Activated naive CD4-positive, alpha-beta T cell treated with anti-CD3 and anti-CD28 coated beads for 36 hours (primary cell): ENCODE measurements at regions of chr5 and their contacts with region 1.

Region 1: DNA sequence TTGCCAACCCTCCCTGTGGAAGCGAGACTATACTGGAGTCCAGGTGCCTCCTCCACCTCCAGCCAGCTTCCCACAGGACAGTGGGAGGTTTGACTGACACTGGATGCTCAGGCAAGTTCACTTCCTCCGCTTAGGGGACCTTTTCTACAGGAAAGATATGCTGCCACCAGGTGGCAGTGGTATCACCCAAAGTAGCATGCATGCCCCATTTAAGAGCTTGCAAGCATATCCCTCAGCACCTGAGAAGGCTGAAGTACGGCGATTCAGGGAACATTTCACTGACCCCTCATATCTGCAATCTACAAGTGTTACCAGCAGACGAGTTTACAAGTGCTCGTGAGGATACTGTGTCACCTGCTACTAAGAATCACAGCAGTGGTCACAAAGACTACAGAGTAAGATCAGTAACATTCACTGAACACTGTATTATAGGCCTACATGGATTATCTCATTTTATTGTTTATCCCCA is 75.5 kb downstream of the KLHL3 start:
- DNase-seq: peak; percentile 88
- H3K4me3 Mint-ChIP-seq: no peak overlapping the region
- H3K27ac Mint-ChIP-seq: no peak overlapping the region
- H3K4me1 Mint-ChIP-seq: peaks cover 9% of the 10 kb centered on the region
- H3K27me3 Mint-ChIP-seq: no peaks in the 10 kb centered on the region

Region 2: GRCh38 chr5:137629646-137630045 is 30.7 kb before region 1 on chr5:
- CTCF ChIA-PET with region 1: interaction called, 52 read pairs
- intact Hi-C with region 1: loop called (anchors 1 kb)
- DNase-seq: peak; percentile 35
- H3K4me3 Mint-ChIP-seq: no peak overlapping the region
- H3K27ac Mint-ChIP-seq: no peak overlapping the region
- H3K4me1 Mint-ChIP-seq: no peaks in the 10 kb centered on the region
- H3K27me3 Mint-ChIP-seq: no peaks in the 10 kb centered on the region

Region 3: GRCh38 chr5:137679910-137680309 is 19.5 kb after region 1 on chr5:
- CTCF ChIA-PET with region 1: interaction called, 10 read pairs
- intact Hi-C with region 1: no loop called
- DNase-seq: no peak
- H3K4me3 Mint-ChIP-seq: no peak overlapping the region
- H3K27ac Mint-ChIP-seq: no peak overlapping the region
- H3K4me1 Mint-ChIP-seq: no peaks in the 10 kb centered on the region
- H3K27me3 Mint-ChIP-seq: no peaks in the 10 kb centered on the region

Region 4: GRCh38 chr5:137695651-137696428 is 35.5 kb after region 1 on chr5:
- CTCF ChIA-PET with region 1: interaction called, 20 read pairs
- intact Hi-C with region 1: loop called (anchors 2 kb)
- DNase-seq: peak; percentile 32
- H3K4me3 Mint-ChIP-seq: peak overlapping the region; percentile 38
- H3K27ac Mint-ChIP-seq: peak overlapping the region; percentile 73
- H3K4me1 Mint-ChIP-seq: peaks cover 48% of the 10 kb centered on the region
- H3K27me3 Mint-ChIP-seq: no peaks in the 10 kb centered on the region

Region 5: GRCh38 chr5:137728048-137728447 is 67.7 kb after region 1 on chr5:
- CTCF ChIA-PET with region 1: interaction called, 508 read pairs
- intact Hi-C with region 1: no loop called
- DNase-seq: no peak
- H3K4me3 Mint-ChIP-seq: no peak overlapping the region
- H3K27ac Mint-ChIP-seq: no peak overlapping the region
- H3K4me1 Mint-ChIP-seq: peaks cover 30% of the 10 kb centered on the region
- H3K27me3 Mint-ChIP-seq: no peaks in the 10 kb centered on the region

Region 6: DNA sequence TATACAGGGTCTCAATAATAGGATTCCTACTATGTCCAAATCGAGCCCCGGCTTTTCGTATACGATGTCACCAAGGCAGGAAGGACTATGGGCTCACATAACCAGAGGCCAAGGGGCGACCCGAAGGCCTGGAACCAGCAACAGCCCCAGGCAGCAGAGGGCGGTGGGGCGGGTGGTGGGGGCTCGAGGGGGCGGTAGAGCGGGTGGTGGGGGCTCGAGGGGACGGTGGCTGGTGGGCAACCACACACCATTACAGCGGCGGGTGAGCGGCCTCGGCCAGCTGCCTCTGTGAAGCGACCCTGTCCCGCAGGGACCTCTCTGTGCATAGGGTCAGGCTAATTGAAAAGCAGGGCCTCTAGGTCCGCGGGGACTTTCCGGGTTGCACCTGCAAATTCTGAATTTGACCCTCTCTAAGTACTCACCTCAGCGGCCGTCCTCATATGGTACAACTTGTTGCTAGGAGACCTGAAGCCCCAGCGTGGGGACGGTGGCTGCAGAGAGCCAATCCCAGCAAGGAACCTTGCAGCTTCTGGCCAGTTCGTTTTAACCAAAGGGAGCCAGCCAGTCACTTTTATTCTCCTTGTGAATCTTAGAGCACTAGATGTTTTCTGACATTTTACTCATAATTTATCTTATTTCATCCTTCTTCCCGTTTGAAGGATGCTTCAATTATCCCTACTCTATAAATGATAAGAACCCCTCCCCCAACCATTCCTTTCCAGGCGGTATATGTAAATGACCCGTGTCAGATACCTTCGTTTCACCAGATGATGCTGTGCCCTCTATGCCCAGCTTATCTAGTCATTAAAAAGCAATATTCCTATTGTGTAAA is 478.8 kb after region 1 on chr5 and contains the start of gene NME5:
- CTCF ChIA-PET with region 1: no interaction called
- intact Hi-C with region 1: loop called (anchors 10 kb)
- DNase-seq: peak; percentile 7
- H3K4me3 Mint-ChIP-seq: no peak within 1 kb of the TSS
- H3K27ac Mint-ChIP-seq: no peak within 1 kb of the TSS
- H3K4me1 Mint-ChIP-seq: peaks cover 4% of the 10 kb centered on the region
- H3K27me3 Mint-ChIP-seq: peaks cover 13% of the 10 kb centered on the region
- total RNA-seq, gene NME5: not detected